ENCODE measurements at regions of chr9 and their contacts with region 1.

Region 1: GRCh38 chr9:104658496-104659195 is 35.7 kb upstream of the OR13D1 start:
- DNase-seq: no peak
- ATAC-seq: no peak
- H3K4me3 ChIP-seq: no peak overlapping the region
- H3K4me3 Mint-ChIP-seq: no peak overlapping the region
- H3K27ac ChIP-seq: no peak overlapping the region
- H3K27ac Mint-ChIP-seq: no peak overlapping the region
- H3K4me1 ChIP-seq: no peaks in the 10 kb centered on the region
- H3K4me1 Mint-ChIP-seq: no peaks in the 10 kb centered on the region
- H3K27me3 ChIP-seq: no peaks in the 10 kb centered on the region
- H3K27me3 Mint-ChIP-seq: peaks cover 4 to 10% of the 10 kb centered on the region in 2 donors

Region 2: DNA sequence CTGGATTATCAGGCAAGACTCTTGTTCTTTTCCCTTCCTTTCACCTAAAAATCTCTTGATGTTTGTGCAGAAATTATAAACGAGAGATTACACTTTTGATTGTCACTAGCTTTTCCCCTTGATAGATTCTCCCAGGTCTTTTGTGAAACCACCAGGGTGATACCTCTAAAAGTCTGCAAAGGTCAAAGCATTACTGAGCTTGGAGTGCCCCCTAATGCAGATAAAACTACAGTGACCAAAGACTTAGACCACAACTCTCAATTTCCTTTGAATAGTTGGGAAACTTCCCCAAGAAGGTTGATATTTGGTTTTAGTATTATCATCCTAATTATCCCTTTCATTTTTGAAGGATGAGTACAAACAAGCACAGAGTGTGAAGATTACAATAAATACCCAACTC is 1490.4 kb before region 1 on chr9:
- CTCF ChIA-PET with region 1: no interaction called
- POLR2A ChIA-PET with region 1: interaction called in 1 of 2 experiments, 11 read pairs
- DNase-seq: no peak
- ATAC-seq: no peak
- H3K4me3 ChIP-seq: no peak overlapping the region
- H3K4me3 Mint-ChIP-seq: no peak overlapping the region
- H3K27ac ChIP-seq: no peak overlapping the region
- H3K27ac Mint-ChIP-seq: no peak overlapping the region
- H3K4me1 ChIP-seq: no peaks in the 10 kb centered on the region
- H3K4me1 Mint-ChIP-seq: no peaks in the 10 kb centered on the region
- H3K27me3 ChIP-seq: no peaks in the 10 kb centered on the region
- H3K27me3 Mint-ChIP-seq: no peaks in the 10 kb centered on the region

Region 3: DNA sequence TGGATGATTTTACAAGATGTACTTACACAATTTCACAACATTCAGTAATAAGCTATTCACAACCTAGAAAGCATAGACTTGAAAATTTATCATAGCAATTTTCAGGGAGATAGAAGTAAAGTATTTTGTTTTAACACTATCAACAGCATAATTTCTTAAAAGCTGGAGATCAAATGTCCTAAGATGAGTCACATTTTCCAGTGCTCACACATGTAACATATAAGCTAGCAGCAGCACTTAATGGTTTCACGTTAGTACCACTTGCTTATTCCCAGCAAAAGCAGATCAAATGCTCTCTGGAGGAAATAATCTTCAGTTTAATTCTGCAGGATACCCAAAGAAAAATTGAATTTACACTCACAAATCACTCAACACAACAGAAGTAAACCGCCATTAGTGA is 83.2 kb before region 1 on chr9:
- CTCF ChIA-PET with region 1: no interaction called
- POLR2A ChIA-PET with region 1: no interaction called
- DNase-seq: no peak
- ATAC-seq: no peak
- H3K4me3 ChIP-seq: no peak overlapping the region
- H3K4me3 Mint-ChIP-seq: no peak overlapping the region
- H3K27ac ChIP-seq: no peak overlapping the region
- H3K27ac Mint-ChIP-seq: no peak overlapping the region
- H3K4me1 ChIP-seq: no peaks in the 10 kb centered on the region
- H3K4me1 Mint-ChIP-seq: no peaks in the 10 kb centered on the region
- H3K27me3 ChIP-seq: no peaks in the 10 kb centered on the region
- H3K27me3 Mint-ChIP-seq: peaks cover 0 to 5% of the 10 kb centered on the region in 2 donors

Region 4: DNA sequence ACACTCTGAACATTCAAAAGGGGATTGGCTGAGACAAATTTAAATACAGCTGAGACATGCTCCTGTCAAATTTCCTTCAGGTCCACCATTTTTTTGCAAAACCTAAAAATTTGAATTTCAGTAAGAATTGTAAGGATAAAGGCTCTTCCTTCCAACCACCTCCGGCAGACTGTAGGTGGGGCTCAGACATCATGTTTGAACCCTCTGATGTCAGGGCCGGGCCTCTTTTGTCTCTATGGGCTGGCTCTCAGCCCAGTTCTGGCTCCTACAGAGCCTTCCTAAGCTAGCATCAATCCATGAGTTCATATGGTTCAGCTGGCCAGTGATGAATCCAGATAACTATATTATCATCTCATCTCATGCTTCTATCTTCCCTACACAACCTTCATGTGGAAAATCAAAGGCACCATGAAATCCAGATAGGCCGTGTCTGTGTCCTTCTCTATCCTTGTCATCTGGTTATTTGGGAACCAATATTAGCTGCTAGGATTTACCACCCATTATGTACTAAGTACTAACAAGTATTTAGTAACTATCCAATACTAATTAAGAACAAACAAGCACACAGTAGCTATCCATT is 149.5 kb after region 1 on chr9:
- CTCF ChIA-PET with region 1: no interaction called
- POLR2A ChIA-PET with region 1: no interaction called
- DNase-seq: peak in 2 of 35 experiments; percentile 1 to 12
- ATAC-seq: no peak
- H3K4me3 ChIP-seq: no peak overlapping the region
- H3K4me3 Mint-ChIP-seq: no peak overlapping the region
- H3K27ac ChIP-seq: no peak overlapping the region
- H3K27ac Mint-ChIP-seq: no peak overlapping the region
- H3K4me1 ChIP-seq: no peaks in the 10 kb centered on the region
- H3K4me1 Mint-ChIP-seq: no peaks in the 10 kb centered on the region
- H3K27me3 ChIP-seq: no peaks in the 10 kb centered on the region
- H3K27me3 Mint-ChIP-seq: no peaks in the 10 kb centered on the region

Measured in T-cell (primary cell).